Activated T-helper 2 cell treated with anti-CD3 and anti-CD28 coated beads, Interferon-gamma antibody, Interleukin-2, Interleukin-4, amounts not matched to agents 10 μg/mL and 5 μg/mL and 100 μg/mL, durations not matched to agents 14 hours and 24 hours and 36 hours (primary cell): ENCODE measurements at regions of chr21 and their contacts with region 1.

Region 1: GRCh38 chr21:29298348-29299045 is at the start of gene BACH1:
- DNase-seq: peak; percentile 78
- H3K4me3 Mint-ChIP-seq: peak within 1 kb of the TSS; percentile 93
- H3K27ac Mint-ChIP-seq: peak within 1 kb of the TSS; percentile 91
- H3K4me1 Mint-ChIP-seq: peaks cover 43% of the 10 kb centered on the region
- H3K27me3 Mint-ChIP-seq: peaks cover 11% of the 10 kb centered on the region
- total RNA-seq, gene BACH1: 35.2 and 37.9 TPM in 2 replicates

Region 2: DNA sequence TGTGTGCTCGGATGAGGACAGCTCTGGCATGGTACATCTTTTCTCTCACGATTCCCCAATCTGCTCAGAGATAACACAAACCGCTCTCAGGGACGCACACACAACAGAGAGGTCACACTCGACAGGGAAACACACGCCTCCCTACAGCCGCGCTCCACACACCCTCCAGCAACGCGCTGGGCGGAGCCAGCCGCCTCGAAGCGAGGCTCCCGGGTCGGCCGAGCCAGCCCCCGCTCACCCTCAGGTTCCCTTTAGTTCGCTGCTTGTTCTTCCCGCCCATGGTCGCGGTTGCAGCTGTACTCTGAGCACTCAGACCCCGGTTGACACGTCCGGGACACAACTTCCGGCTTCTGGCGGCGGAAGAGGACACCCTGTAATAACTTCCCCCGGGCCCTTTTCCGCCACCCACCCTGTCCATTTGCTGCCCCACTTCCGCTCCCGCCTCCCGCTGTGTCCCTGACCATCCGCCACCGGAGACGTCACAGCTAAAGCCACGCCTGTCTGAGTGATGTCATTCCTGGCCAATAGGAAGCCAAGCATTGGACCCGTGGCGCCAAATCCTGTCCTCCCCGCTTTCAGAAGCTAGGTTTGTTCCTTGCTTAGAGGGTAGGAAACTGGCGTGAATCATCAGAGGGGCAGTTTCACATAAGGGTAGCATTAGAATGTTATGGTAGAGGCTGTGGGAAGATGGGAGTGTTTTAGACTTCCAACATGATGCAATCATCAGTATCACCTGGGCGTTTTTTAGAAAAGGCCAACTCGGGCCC is 305.8 kb before region 1 on chr21 and contains the start of gene LTN1:
- intact Hi-C with region 1: loop called (anchors 2 kb)
- DNase-seq: peak; percentile 99
- H3K4me3 Mint-ChIP-seq: peak within 1 kb of the TSS; percentile 95
- H3K27ac Mint-ChIP-seq: peak within 1 kb of the TSS; percentile 95
- H3K4me1 Mint-ChIP-seq: peaks cover 30% of the 10 kb centered on the region
- H3K27me3 Mint-ChIP-seq: no peaks in the 10 kb centered on the region
- total RNA-seq, gene LTN1: 24.9 and 27.5 TPM in 2 replicates

Region 3: GRCh38 chr21:29145354-29145782 is 153.1 kb before region 1 on chr21:
- intact Hi-C with region 1: loop called (anchors 5 kb)
- DNase-seq: no peak
- H3K4me3 Mint-ChIP-seq: no peak overlapping the region
- H3K27ac Mint-ChIP-seq: no peak overlapping the region
- H3K4me1 Mint-ChIP-seq: peaks cover 16% of the 10 kb centered on the region
- H3K27me3 Mint-ChIP-seq: no peaks in the 10 kb centered on the region

Region 4: DNA sequence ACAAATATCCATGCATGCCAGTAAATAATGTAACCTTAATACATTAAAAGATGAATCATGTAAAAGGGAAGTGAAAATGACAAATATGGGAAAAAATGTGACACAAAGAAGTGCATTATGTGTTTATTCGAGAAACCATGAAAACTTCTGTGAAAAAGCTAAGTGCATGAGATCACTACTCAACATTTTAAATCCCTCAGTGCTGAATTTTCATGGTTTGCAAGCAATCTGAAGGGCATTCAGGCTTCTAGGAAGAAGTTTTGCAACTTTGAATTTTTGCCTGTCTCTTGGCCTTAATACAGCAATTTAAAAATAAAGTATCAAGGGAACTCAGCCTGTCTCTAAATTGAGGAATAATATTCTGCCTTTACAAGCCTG is 89.8 kb before region 1 on chr21:
- intact Hi-C with region 1: no loop called
- DNase-seq: no peak
- H3K4me3 Mint-ChIP-seq: no peak overlapping the region
- H3K27ac Mint-ChIP-seq: no peak overlapping the region
- H3K4me1 Mint-ChIP-seq: peaks cover 13% of the 10 kb centered on the region
- H3K27me3 Mint-ChIP-seq: no peaks in the 10 kb centered on the region

Region 5: GRCh38 chr21:29232601-29233546 is 65.6 kb before region 1 on chr21:
- intact Hi-C with region 1: loop called (anchors 2 kb)
- DNase-seq: no peak
- H3K4me3 Mint-ChIP-seq: no peak overlapping the region
- H3K27ac Mint-ChIP-seq: no peak overlapping the region
- H3K4me1 Mint-ChIP-seq: peaks cover 37% of the 10 kb centered on the region
- H3K27me3 Mint-ChIP-seq: peaks cover 56% of the 10 kb centered on the region

Region 6: DNA sequence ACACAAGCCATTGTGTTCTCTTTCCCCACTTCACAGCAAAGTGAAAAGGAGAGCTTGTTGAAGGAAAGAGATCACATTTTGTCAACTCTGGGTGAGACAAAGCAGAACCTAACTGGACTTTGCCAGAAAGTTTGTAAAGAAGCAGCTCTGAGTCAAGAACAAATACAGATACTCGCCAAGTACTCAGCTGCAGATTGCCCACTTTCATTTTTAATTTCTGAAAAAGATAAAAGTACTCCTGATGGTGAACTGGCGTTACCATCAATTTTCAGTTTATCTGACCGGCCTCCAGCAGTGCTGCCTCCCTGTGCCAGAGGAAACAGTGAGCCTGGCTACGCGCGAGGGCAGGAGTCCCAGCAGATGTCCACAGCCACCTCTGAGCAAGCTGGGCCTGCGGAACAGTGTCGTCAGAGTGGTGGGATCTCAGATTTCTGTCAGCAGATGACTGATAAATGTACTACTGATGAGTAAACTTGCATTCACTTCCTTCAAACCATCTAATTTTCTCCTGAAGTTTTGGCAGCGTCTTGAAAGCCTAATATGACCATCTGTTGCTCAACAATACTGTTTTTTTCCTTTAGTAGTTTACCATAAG is 44.0 kb after region 1 on chr21:
- intact Hi-C with region 1: loop called (anchors 2 kb)
- DNase-seq: peak; percentile 14
- H3K4me3 Mint-ChIP-seq: peak overlapping the region; percentile 51
- H3K27ac Mint-ChIP-seq: peak overlapping the region; percentile 86
- H3K4me1 Mint-ChIP-seq: peaks cover 43% of the 10 kb centered on the region
- H3K27me3 Mint-ChIP-seq: no peaks in the 10 kb centered on the region

Region 7: DNA sequence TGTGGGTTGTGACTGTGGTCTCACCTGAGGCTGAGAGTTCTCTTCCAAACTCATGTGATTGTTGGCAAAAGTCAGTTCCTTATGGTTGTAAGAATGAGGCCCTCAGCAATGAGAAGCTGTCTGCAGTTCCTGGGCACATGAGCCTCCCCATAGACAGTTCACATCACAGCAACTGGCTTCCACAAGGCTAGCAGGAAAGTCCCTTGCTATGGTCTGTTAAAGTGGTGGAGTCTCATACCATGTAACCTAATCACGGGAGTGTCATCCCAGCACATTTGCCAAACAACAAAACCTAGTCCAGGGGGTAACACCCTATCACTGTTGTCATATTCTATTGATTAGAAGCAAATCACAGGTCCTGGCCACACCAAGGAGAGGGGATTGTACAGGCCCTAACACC is 164.0 kb after region 1 on chr21:
- intact Hi-C with region 1: no loop called
- DNase-seq: no peak
- H3K4me3 Mint-ChIP-seq: no peak overlapping the region
- H3K27ac Mint-ChIP-seq: no peak overlapping the region
- H3K4me1 Mint-ChIP-seq: no peaks in the 10 kb centered on the region
- H3K27me3 Mint-ChIP-seq: no peaks in the 10 kb centered on the region